GM18951 (cell line): ENCODE measurements at regions of chr5 and their contacts with region 1.

Region 1: DNA sequence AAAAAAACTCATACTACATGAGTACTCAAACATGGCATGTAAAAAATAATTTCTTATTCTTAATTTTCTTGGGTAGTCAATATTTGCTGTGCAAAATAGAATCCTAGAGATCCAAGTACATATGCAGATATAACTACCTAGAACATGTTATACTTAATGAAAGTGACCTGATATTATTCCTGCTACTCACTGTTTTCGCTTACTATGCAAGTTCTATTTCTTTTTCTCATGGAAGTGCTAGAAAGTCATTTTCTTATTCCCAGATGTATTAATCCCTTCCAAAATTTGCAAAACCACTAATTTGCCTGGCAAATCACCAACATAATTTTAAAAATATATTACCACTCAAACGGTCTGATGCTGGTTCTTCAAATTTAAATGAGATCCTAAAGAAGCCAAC is 19.2 kb upstream of the PLAC8L1 start:
- POLR2A ChIP-seq: no peak

Region 2: DNA sequence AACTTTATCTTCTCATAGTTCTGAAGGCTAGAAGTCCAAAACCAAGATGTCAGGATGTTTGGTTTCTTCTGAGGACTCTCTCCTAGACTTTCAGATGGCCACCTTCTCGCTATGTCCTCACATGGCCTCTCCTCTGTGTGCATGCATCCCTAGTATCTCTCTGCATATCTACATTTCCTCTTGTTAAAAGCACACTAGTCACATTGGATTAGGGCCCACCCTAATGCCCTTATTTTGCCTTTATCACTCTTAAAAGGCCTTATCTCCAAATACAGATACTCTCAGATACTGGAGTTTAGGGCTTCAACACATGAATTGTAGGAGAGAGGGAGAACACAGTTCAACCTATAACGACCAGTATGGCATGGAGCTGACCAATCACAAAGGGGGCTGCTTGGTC is 441.1 kb before region 1 on chr5:
- in situ Hi-C with region 1: no loop called
- POLR2A ChIP-seq: no peak

Region 3: GRCh38 chr5:145697251-145697990 is 427.2 kb before region 1 on chr5:
- in situ Hi-C with region 1: loop called (anchors 10 kb)
- POLR2A ChIP-seq: no peak